Psoas muscle (tissue), 8 donors: ENCODE measurements at regions of chr1 and their contacts with region 1.

Region 1: GRCh38 chr1:208245185-208245705 is 1.1 kb upstream of the PLXNA2 start:
- DNase-seq: peak; percentile 86 to 91
- ATAC-seq: peak; percentile 68 to 81 (median 75)
- H3K4me3 ChIP-seq: peak overlapping the region; percentile 84
- H3K27ac ChIP-seq: peak overlapping the region; percentile 90
- H3K4me1 ChIP-seq: peaks cover 25% of the 10 kb centered on the region
- H3K27me3 ChIP-seq: no peaks in the 10 kb centered on the region
- CTCF ChIP-seq: peak; percentile 90

Region 2: DNA sequence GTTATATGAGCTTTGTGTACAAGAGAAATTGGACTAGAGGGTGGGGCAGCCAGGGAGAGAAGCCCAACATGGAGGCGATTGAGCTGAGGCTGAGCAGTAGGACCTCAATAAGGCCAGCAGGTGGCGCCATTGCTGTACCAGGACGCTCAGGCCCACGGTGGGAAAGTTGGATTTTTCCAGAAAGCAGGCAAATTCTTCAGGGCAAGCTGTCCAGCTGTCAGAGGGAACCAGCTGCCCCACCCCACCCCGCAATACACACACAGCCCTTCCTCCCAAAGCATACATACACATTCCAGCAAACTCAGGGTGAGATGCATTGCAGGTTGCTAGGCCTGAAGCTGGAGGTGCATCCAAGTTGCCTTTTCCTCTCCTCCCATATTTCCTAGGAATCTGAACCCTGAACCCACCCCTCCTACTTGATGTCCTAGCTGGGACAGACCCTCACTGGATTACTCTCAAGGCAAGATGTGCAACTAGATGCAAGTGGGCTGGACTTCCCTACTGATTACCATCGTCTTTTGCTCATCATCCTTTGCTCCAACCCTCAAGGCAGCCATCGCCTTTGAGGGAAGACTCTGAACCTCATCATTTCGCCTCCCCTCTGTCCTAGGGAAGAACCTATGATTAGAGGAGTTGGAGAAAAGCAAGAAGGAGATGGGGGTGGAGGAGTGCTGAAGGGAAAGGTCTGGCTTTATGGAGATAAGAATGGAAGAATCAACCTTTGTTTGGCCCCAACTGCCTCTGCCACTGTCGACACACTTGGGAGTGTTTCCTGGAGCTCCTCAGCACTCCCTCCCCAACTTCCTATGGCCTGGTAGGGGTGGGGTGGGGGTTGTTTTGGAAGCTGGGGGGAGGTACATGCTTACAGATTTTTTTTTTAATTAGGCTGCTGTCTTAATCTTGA is 359.9 kb before region 1 on chr1:
- intact Hi-C with region 1: loop called in 1 of 2 experiments (anchors 10 kb)
- DNase-seq: peak; percentile 83 to 90
- ATAC-seq: peak; percentile 83 to 94 (median 90)
- H3K4me3 ChIP-seq: no peak overlapping the region
- H3K27ac ChIP-seq: peak overlapping the region; percentile 30
- H3K4me1 ChIP-seq: peaks cover 23% of the 10 kb centered on the region
- H3K27me3 ChIP-seq: no peaks in the 10 kb centered on the region
- CTCF ChIP-seq: peak; percentile 97

Region 3: GRCh38 chr1:208025031-208025430 is 220.2 kb before region 1 on chr1:
- intact Hi-C with region 1: loop called (anchors 1 to 5 kb)
- DNase-seq: peak; percentile 65 to 81
- ATAC-seq: peak; percentile 64 to 91 (median 75)
- H3K4me3 ChIP-seq: no peak overlapping the region
- H3K27ac ChIP-seq: peak overlapping the region; percentile 28
- H3K4me1 ChIP-seq: peaks cover 13% of the 10 kb centered on the region
- H3K27me3 ChIP-seq: no peaks in the 10 kb centered on the region
- CTCF ChIP-seq: no peak

Region 4: GRCh38 chr1:208132287-208132883 is 112.9 kb before region 1 on chr1:
- intact Hi-C with region 1: loop called (anchors 2 to 5 kb)
- DNase-seq: peak; percentile 82 to 93
- ATAC-seq: peak; percentile 78 to 91 (median 82)
- H3K4me3 ChIP-seq: no peak overlapping the region
- H3K27ac ChIP-seq: peak overlapping the region; percentile 57
- H3K4me1 ChIP-seq: peaks cover 65% of the 10 kb centered on the region
- H3K27me3 ChIP-seq: no peaks in the 10 kb centered on the region
- CTCF ChIP-seq: peak; percentile 90

Region 5: DNA sequence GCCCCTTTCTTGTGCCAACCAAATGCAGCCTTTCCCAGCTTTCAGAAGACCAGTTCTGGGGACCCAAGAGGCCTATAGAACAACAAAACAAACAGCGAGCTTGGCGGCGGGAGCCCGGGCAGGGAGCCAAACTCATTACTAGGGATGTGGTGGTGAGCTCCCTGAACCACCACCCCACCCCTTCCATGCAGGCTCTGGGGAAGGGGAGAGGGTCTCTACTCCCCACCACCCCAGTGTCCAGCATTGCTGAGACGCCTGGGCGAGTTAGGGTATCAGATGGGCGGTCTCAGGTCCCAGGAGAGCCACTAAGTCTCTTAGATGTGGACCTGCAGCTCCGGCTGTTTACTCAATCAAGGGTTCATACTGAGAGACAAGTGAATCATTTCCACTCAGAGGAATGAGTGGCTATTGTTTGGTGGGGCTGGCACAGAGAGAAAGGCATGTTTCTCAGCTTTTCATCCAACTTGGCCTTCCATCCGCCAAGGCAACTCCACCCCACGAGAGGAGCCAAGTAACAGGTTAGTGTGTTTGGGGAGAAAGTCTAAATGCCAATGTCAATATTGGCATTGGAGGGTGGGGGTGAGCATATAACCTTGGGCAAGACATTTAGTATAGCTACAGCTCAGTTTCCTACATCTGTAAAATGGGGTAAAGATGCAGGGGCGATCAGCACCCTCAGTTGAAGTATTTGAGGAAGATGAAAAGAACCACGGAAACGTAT is 42.0 kb before region 1 on chr1:
- intact Hi-C with region 1: loop called in 1 of 2 experiments (anchors 5 kb)
- DNase-seq: peak in 1 of 2 donors; percentile 41
- ATAC-seq: no peak
- H3K4me3 ChIP-seq: no peak overlapping the region
- H3K27ac ChIP-seq: peak overlapping the region; percentile 54
- H3K4me1 ChIP-seq: peaks cover 37% of the 10 kb centered on the region
- H3K27me3 ChIP-seq: no peaks in the 10 kb centered on the region
- CTCF ChIP-seq: no peak